HEK293 (cell line): ENCODE measurements at regions of chr1 and their contacts with region 1.

Region 1: DNA sequence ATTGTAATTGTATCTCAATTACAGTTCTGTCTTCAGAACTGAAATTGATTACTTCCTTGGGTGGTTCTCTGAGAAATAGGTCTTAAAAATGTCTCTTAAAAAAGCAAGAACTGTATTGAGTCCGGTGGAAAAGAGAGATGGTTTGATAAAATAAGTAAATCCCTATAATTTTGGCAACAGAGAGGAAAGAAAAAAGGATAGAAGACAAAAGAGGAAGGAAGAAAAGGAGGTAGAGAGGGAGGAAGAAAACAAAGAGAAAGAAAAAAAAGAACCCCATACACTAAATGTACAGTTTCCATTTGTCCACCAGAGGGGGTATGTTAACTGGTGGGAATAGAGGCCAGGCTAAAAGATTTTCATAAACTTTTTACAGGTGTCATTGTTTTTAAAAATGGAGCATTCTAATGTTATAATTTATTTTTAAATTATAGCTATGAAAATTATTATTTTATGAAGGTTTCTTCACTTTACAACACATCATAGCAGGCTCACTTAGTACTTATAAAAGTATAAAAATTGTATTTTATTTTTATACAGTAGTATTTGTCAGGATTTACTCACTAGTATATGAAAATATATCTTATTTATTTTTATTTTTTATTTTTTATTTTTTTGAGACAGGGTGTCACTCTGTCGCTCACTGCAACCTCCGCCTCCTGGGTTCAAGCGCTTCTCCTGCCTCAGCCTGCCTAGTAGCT is 2.1 kb upstream of the UBE2T start:
- H3K4me3 ChIP-seq: no peak overlapping the region
- H3K27ac ChIP-seq: no peak overlapping the region
- H3K4me1 ChIP-seq: no peaks in the 10 kb centered on the region
- CTCF ChIP-seq: peak; percentile 61; the same call in 1 of the 2 replicates

Region 2: GRCh38 chr1:202176949-202177927 is 166.6 kb before region 1 on chr1:
- CTCF ChIA-PET with region 1: no interaction called
- POLR2A ChIA-PET with region 1: no interaction called
- H3K4me3 ChIP-seq: no peak overlapping the region
- H3K27ac ChIP-seq: no peak overlapping the region
- H3K4me1 ChIP-seq: no peaks in the 10 kb centered on the region
- CTCF ChIP-seq: no peak

Region 3: DNA sequence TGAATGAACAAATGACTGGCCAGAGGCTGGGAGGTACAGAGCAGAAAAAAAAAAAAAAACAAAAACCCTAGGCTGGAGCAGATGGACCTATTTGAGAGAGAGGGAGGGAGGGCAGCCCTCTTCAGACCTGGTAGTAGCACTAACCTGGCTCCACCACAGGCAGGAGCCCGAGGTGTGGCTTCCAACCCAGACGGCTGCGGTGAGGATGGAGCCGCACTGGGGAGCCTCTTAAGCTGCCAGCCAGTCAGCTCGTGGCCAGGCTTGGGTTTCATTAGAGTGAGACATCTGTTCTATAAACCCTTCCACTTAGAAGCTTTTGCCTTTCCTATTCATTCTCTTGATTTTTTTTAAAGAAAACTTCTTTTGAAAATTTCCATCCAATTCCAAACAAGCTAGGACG is 133.4 kb before region 1 on chr1:
- CTCF ChIA-PET with region 1: no interaction called
- POLR2A ChIA-PET with region 1: no interaction called
- H3K4me3 ChIP-seq: no peak overlapping the region
- H3K27ac ChIP-seq: no peak overlapping the region
- H3K4me1 ChIP-seq: no peaks in the 10 kb centered on the region
- CTCF ChIP-seq: peak; percentile 40; the same call in 1 of the 2 replicates

Region 4: GRCh38 chr1:202221911-202222909 is 121.6 kb before region 1 on chr1:
- CTCF ChIA-PET with region 1: no interaction called
- POLR2A ChIA-PET with region 1: no interaction called
- H3K4me3 ChIP-seq: no peak overlapping the region
- H3K27ac ChIP-seq: peak overlapping the region; percentile 46; the same call in 1 of the 2 replicates
- H3K4me1 ChIP-seq: no peaks in the 10 kb centered on the region; the same call in 1 of the 2 replicates
- CTCF ChIP-seq: no peak

Region 5: GRCh38 chr1:202329891-202330290 is 13.9 kb before region 1 on chr1:
- CTCF ChIA-PET with region 1: interaction called, 9 read pairs
- POLR2A ChIA-PET with region 1: interaction called, 10 read pairs
- H3K4me3 ChIP-seq: no peak overlapping the region
- H3K27ac ChIP-seq: no peak overlapping the region
- H3K4me1 ChIP-seq: no peaks in the 10 kb centered on the region
- CTCF ChIP-seq: no peak